Activated CD8-positive, alpha-beta memory T cell treated with anti-CD3 and anti-CD28 coated beads, Interleukin-2, amount 10 ng/mL, durations not matched to agents 7 days and 5 days (primary cell): ENCODE measurements at regions of chr6 and their contacts with region 1.

Region 1: GRCh38 chr6:31139599-31139998 is 733 bp upstream of the PSORS1C2 start:
- DNase-seq: no peak
- ATAC-seq: no peak
- H3K4me3 Mint-ChIP-seq: no peak overlapping the region
- H3K27ac Mint-ChIP-seq: no peak overlapping the region
- H3K4me1 Mint-ChIP-seq: peaks cover 4% of the 10 kb centered on the region
- H3K27me3 Mint-ChIP-seq: no peaks in the 10 kb centered on the region

Region 2: GRCh38 chr6:31128093-31128676 is 11.4 kb before region 1 on chr6:
- CTCF ChIA-PET with region 1: interaction called, 23 read pairs
- DNase-seq: peak; percentile 82
- ATAC-seq: peak; percentile 80
- H3K4me3 Mint-ChIP-seq: no peak overlapping the region
- H3K27ac Mint-ChIP-seq: no peak overlapping the region
- H3K4me1 Mint-ChIP-seq: no peaks in the 10 kb centered on the region
- H3K27me3 Mint-ChIP-seq: peaks cover 18% of the 10 kb centered on the region